ENCODE measurements at regions of chr13 and their contacts with region 1.

Region 1: DNA sequence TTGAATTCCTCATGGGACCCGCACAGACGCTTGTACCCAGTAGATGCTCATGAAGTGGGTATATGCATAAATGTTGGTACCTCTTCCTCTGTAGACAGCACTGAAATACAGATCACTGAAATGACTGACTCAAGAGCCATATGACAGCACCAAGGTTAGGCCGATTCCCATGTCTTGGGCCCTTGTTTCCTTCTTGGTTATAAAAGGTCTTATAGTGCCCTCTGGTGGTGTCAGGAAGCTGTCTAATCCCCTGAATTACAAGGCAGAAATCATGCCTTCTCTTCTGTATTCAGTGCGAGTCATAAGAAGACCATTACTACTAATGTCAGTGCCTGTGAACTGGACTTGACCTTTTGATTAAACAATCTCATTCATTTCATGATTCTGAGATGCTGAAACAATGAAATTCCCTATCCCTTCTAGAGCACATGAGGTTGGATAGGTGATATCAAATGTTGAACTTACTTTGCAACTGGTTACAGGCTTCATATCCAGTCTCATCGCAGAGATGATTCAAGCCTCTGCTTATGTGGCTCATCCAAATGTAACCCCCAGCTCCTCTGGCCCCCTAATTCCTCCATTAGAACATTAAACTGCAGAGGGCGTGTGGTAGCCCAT is 59.7 kb downstream of the SPATA13 start:
- DNase-seq: peak in 2 of 4 donors; percentile 71 to 82
- ATAC-seq: peak; percentile 89
- H3K4me3 ChIP-seq: no peak overlapping the region
- H3K27ac ChIP-seq: peak overlapping the region; percentile 9 to 41
- H3K4me1 ChIP-seq: peaks cover 19 to 45% of the 10 kb centered on the region in 2 donors
- H3K27me3 ChIP-seq: no peaks in the 10 kb centered on the region
- CTCF ChIP-seq: peak; percentile 65 to 81

Region 2: DNA sequence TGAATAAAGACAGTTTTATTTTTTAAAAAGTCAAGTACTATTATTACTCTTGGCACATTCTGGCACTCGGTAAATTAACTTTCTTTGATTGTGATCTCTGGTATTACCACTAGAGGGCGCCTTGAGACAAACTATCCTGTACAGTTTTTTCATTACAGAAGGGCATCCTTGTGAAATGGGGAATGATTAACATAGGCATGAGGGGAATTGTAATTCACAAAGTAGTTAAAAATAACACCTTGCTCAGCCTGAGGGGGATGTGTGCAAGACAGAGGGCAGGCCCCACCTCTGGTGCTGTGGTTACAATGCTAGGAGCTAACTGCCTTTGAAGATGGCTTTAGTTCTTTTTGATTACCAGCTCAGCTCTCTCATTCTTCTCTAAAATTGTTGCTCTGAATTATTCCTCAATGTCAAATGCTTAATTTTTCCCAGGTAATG is 298.7 kb before region 1 on chr13:
- intact Hi-C with region 1: loop called in 1 of 2 experiments (anchors 5 kb)
- DNase-seq: peak in 2 of 4 donors; percentile 47 to 61
- ATAC-seq: peak; percentile 90
- H3K4me3 ChIP-seq: no peak overlapping the region
- H3K27ac ChIP-seq: no peak overlapping the region
- H3K4me1 ChIP-seq: no peaks in the 10 kb centered on the region
- H3K27me3 ChIP-seq: no peaks in the 10 kb centered on the region
- CTCF ChIP-seq: peak; percentile 60 to 74

Region 3: GRCh38 chr13:23966691-23967615 is 253.2 kb before region 1 on chr13:
- intact Hi-C with region 1: no loop called
- DNase-seq: peak in 1 of 4 donors; percentile 44
- ATAC-seq: no peak
- H3K4me3 ChIP-seq: no peak overlapping the region
- H3K27ac ChIP-seq: peak overlapping the region; percentile 45 to 57
- H3K4me1 ChIP-seq: peaks cover 0 to 17% of the 10 kb centered on the region in 2 donors
- H3K27me3 ChIP-seq: no peaks in the 10 kb centered on the region
- CTCF ChIP-seq: no peak

Region 4: DNA sequence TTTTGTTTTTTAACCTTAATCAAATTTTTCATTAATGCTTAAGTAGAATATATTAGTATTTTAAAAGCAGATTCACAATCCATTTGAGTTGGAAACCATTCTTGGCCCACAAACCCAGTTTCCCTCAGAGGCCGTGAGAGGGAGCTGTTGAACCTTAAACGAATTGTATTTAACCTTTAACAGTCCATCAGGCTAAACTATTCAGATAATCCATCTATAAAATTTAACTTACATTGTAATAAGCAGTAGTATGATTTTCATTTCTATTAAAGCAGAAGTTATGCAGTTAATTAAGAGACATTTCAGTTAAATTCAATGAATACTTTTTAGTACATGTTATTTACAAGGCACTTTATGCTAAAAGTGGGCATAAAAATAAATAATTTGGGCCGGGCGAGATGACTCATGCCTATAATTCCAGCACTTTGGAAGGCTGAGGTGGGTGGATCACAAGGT is 199.8 kb before region 1 on chr13:
- intact Hi-C with region 1: loop called in 1 of 2 experiments (anchors 5 kb)
- DNase-seq: peak in 2 of 4 donors; percentile 54 to 70
- ATAC-seq: peak; percentile 86
- H3K4me3 ChIP-seq: no peak overlapping the region
- H3K27ac ChIP-seq: no peak overlapping the region
- H3K4me1 ChIP-seq: no peaks in the 10 kb centered on the region
- H3K27me3 ChIP-seq: no peaks in the 10 kb centered on the region
- CTCF ChIP-seq: peak; percentile 67 to 81

Region 5: GRCh38 chr13:24053519-24054251 is 166.5 kb before region 1 on chr13:
- intact Hi-C with region 1: loop called in 1 of 2 experiments (anchors 10 kb)
- DNase-seq: peak in 1 of 4 donors; percentile 68
- ATAC-seq: peak; percentile 94
- H3K4me3 ChIP-seq: no peak overlapping the region
- H3K27ac ChIP-seq: peak overlapping the region; percentile 37 to 48
- H3K4me1 ChIP-seq: peaks cover 14 to 30% of the 10 kb centered on the region in 2 donors
- H3K27me3 ChIP-seq: no peaks in the 10 kb centered on the region
- CTCF ChIP-seq: peak; percentile 56 to 80